Heart left ventricle (tissue), 16 donors: ENCODE measurements at regions of chr11 and their contacts with region 1.

Region 1: DNA sequence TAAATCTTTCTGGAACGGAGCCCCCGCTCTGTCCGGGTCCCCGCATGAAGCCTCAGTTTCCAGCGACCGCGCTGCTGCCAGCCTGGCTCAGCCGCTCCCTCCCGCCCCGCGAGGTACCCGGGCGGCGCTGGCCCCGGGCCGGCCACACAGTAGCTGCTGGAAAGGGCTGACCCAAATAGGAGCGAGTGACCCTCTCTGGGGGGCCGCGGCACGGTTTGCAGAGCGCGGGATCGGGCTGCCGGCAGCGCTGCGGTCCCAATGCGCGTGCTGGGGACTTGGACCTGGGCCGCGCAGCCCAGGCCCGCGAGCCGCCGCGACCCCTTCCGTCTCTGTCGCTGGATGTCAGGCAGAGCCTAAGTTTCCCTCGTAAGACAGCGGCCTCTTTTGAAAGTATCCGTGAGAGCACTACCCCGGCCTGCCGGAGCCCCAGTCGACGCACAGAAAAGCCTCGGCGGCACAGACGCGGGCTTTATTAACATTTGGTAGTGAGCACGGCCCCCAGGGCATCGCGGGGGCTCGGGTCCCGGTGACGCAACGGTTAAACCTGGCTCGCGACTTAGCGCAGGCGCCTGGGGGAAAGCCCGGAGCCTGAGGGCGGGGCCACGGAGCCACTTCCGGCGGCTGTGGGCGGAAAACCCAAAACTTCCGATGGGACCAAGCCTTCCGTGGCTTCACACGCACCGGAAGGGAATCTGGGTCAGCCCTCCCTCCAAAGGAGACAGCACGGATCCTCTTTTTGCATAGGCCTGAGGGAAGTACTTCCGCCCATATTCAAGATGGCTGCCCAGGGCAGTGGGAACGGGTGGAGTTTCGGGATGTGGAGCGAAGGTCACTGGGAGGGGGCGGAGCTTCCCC is 14.9 kb downstream of the BAD start:
- DNase-seq: peak; percentile 98 to 99 (median 98)
- ATAC-seq: peak; percentile 86 to 91 (median 90)
- H3K4me3 ChIP-seq: peak overlapping the region; percentile 63 to 98 (median 80)
- H3K27ac ChIP-seq: peak overlapping the region; percentile 86 to 100 (median 97)
- H3K4me1 ChIP-seq: peaks cover 2 to 51% (median 33%) of the 10 kb centered on the region in 12 donors
- H3K27me3 ChIP-seq: no peaks in the 10 kb centered on the region
- CTCF ChIP-seq: peak in 6 of 12 donors; percentile 6 to 53 (median 12)
- POLR2A ChIP-seq: peak in 1 of 2 donors; percentile 50

Region 2: DNA sequence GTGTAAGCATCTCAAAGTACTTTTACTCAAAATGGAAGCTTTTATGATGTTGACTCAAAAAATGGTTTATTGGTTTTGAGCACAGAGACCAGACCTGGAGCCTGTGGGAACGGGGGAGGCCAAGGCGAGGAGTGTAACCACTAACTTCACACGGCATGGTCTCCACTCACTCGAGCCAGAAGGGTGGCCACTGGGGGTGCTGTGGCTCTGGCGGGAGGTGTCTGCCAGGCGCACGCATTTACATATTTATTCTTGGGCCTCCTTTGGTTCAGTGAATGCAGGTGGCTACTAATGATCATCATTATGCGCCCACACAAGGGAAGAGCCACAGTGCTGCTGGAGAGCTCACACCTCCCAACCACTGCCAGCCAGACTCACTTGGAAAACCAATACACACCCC is 169.2 kb before region 1 on chr11:
- intact Hi-C with region 1: no loop called
- DNase-seq: no peak
- ATAC-seq: no peak
- H3K4me3 ChIP-seq: no peak overlapping the region
- H3K27ac ChIP-seq: no peak overlapping the region
- H3K4me1 ChIP-seq: peaks cover 0 to 12% (median 0%) of the 10 kb centered on the region in 12 donors
- H3K27me3 ChIP-seq: no peaks in the 10 kb centered on the region
- CTCF ChIP-seq: no peak
- POLR2A ChIP-seq: no peak

Region 3: GRCh38 chr11:64181506-64182411 is 87.8 kb before region 1 on chr11:
- intact Hi-C with region 1: no loop called
- DNase-seq: peak; percentile 93 to 97 (median 94)
- ATAC-seq: peak; percentile 73 to 78 (median 74)
- H3K4me3 ChIP-seq: peak overlapping the region in 9 of 12 donors; percentile 17 to 52 (median 39)
- H3K27ac ChIP-seq: peak overlapping the region; percentile 69 to 93 (median 82)
- H3K4me1 ChIP-seq: peaks cover 5 to 52% (median 43%) of the 10 kb centered on the region in 12 donors
- H3K27me3 ChIP-seq: no peaks in the 10 kb centered on the region
- CTCF ChIP-seq: no peak
- POLR2A ChIP-seq: peak; percentile 87 to 95

Region 4: DNA sequence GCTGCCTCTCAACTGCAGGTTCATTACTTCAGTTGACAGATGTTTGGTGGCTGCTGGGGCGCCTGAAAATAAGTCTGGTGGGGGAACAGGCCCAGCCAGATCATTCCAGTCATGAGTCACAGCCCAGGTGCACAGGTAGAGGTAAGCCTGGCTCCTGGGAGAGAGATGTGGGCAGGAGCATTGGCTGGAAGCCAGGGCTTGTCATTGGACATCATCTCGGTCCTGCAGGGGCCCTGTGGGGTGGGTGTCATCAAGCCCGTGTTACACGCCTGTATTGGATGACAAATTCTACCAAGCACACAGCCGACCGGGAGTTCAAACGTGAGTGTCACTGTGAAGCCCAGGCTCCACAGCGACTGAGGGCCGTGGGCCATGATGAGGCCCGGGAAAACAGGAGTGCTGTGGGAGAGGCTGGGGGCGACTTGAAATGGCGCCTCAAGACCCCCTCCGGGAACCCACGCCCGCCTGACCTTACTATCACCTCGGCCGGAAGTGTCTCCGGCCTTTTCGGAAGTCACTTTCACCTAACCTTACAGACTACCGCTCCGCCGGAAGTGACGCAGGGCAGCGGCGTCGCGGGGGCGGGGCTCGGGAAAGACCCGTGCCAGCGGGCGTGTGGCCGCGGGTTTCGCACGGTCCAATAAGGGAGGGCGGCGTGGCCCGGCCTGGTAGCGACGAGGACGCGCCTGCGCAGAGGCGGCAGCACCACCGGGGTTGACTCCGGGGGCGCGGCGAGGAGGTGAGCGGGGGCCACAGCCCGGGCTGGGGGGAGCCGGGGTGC is 29.0 kb before region 1 on chr11 and contains the start of gene FKBP2:
- intact Hi-C with region 1: loop called in 2 of 10 experiments (anchors 1 kb)
- DNase-seq: peak; percentile 97 to 99 (median 98)
- ATAC-seq: peak; percentile 68 to 78 (median 74)
- H3K4me3 ChIP-seq: peak within 1 kb of the TSS; percentile 65 to 99 (median 80)
- H3K27ac ChIP-seq: peak within 1 kb of the TSS; percentile 95 to 100 (median 99)
- H3K4me1 ChIP-seq: peaks cover 0 to 68% (median 34%) of the 10 kb centered on the region in 12 donors
- H3K27me3 ChIP-seq: no peaks in the 10 kb centered on the region
- CTCF ChIP-seq: no peak
- POLR2A ChIP-seq: peak; percentile 65 to 91
- total RNA-seq, gene FKBP2: 35.0 to 71.5 (median 51.8) TPM

Region 5: DNA sequence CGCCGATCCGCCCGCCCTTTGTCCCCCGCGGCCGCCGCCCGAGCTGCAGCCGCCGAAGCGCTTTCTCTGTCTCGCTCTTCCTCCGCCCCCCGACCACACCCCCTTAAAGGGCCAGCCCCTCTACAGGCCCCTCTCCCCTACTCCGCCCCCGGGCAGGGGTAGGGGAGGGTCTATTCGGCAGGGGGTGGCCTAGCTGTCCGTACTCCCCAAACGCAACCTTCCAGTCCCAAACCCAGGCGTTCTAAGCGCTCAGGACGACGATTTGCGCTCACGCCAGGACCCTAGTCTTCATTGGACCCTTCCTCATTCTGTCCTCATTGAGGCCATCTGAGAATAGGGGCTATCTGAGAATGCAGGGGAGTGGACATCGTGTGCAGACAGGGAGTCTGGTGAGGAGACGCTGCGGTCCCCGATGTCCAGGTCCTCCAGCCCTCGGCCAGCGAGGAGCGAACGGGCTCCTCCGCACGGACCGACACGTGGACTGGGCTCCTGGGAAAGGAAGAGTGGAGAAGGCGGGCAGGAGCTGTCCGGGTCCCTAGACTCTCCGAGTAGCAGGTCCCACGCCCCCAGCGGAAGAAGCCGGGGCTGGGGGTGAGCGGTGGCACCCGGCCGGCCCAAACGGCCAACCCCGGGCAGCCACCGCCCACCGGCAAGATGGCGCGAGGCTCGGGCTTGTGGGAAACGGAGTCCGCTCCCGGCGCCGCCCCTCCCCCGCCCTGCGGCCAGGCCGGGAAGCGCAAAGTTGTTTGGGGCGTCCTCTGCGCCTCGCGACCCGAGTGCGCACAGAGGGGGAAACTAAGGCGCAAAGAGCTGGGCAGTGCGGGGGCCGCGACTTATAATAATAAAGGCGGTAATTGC is 22.5 kb before region 1 on chr11 and contains the start of gene PPP1R14B:
- intact Hi-C with region 1: loop called in 4 of 10 experiments (anchors 1 to 2 kb)
- DNase-seq: peak; percentile 90 to 94 (median 93)
- ATAC-seq: peak; percentile 58 to 74 (median 68)
- H3K4me3 ChIP-seq: peak within 1 kb of the TSS; percentile 56 to 90 (median 72)
- H3K27ac ChIP-seq: peak within 1 kb of the TSS; percentile 49 to 96 (median 92)
- H3K4me1 ChIP-seq: peaks cover 5 to 65% (median 37%) of the 10 kb centered on the region in 12 donors
- H3K27me3 ChIP-seq: no peaks in the 10 kb centered on the region
- CTCF ChIP-seq: peak in 7 of 12 donors; percentile 8 to 31 (median 18)
- POLR2A ChIP-seq: peak in 1 of 2 donors; percentile 50
- total RNA-seq, gene PPP1R14B: 69.6 to 244 (median 90.4) TPM

Region 6: DNA sequence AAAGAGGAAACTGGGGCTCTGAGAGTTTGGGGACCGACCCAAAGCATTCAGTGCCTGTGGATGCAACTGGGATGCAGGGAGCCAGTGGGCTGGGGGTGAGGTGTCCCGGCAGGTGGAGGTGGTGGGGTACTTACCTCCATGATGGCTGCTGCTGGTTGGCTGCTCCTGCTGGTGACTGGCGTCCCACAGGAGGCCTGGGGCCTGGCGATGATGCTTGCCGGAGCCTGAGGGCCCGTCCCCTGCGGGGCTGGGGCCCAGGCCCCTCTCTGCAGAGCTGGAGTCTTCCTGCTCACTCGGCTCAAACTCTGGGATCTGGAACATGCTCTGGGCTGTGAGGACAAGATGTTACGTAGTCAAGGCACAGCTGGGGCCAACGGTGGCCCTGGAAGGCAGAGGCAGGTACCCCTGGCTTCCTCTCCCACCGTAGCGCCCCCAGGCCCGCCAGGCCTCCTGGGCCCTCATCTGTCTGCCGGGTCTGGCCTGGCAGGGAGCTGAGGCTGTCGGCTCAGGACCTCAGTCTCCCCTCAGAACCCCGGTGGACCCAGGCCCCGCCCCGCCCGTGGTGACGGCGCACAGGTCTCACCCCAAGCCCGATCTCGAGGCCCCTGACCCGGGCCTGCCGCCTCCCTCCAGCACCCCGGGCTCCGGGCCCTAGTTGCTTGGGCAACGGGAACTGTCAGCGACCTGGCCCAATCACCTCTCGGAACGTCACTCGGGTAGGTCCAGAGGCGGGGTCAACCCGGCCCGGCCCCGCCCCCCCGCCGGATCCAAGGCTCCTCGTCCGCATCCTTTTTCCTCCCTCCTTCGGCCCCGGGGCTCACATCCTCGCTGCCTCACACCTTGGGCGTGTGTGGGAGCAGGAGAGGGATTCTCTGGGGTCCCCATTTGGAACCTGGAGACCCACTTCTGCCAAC is 14.7 kb after region 1 on chr11 and contains the start of gene BAD:
- intact Hi-C with region 1: loop called in 4 of 10 experiments (anchors 1 kb)
- DNase-seq: peak; percentile 96 to 97 (median 96)
- ATAC-seq: peak; percentile 92 to 97 (median 93)
- H3K4me3 ChIP-seq: peak within 1 kb of the TSS; percentile 40 to 96 (median 78)
- H3K27ac ChIP-seq: peak within 1 kb of the TSS; percentile 94 to 99 (median 98)
- H3K4me1 ChIP-seq: peaks cover 4 to 47% (median 24%) of the 10 kb centered on the region in 12 donors
- H3K27me3 ChIP-seq: no peaks in the 10 kb centered on the region
- CTCF ChIP-seq: no peak
- POLR2A ChIP-seq: peak in 1 of 2 donors; percentile 72
- total RNA-seq, gene BAD: 41.5 to 123 (median 49.9) TPM